Activated CD4-positive, alpha-beta T cell treated with anti-CD3 and anti-CD28 coated beads, Interleukin-2, amount 10 ng/mL, durations not matched to agents 24 days and 14 days (primary cell): ENCODE measurements at regions of chr5 and their contacts with region 1.

Region 1: DNA sequence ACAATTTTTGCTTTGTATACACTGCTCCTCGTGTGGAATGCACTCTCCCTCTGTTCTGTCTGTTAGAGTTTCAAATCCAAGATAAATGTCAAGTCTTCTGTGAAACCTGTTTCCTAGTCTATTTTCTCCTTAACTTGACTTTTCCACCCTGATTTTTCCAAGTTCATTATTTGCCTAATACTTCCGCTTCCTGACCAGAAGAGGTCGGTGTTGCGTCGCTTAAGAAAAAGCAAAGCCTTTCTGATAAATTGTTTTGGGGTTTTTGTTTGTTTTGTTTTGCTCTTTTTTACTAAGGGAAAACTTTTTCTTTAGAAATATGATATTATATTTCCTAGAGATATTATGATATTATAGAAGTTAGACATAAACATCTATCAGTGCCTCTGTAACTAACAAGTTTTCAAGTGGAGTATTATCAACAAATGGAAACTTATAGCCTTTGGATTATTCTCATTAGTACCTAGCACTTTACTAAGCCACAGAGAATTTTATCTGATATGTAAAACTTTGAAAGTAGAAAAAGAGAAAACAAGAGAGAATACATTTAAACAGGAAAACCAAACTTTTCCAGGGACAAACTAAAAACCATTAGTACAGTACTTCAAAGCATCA is 55.8 kb downstream of the PHAX start:
- DNase-seq: peak; percentile 73
- H3K4me3 Mint-ChIP-seq: no peak overlapping the region
- H3K27ac Mint-ChIP-seq: no peak overlapping the region
- H3K4me1 Mint-ChIP-seq: peaks cover 6% of the 10 kb centered on the region
- H3K27me3 Mint-ChIP-seq: peaks cover 10% of the 10 kb centered on the region

Region 2: GRCh38 chr5:126801992-126802294 is 145.4 kb after region 1 on chr5:
- intact Hi-C with region 1: loop called (anchors 1 kb)
- DNase-seq: peak; percentile 72
- H3K4me3 Mint-ChIP-seq: no peak overlapping the region
- H3K27ac Mint-ChIP-seq: peak overlapping the region; percentile 6
- H3K4me1 Mint-ChIP-seq: peaks cover 45% of the 10 kb centered on the region
- H3K27me3 Mint-ChIP-seq: no peaks in the 10 kb centered on the region

Region 3: GRCh38 chr5:127313847-127314473 is 657.5 kb after region 1 on chr5:
- intact Hi-C with region 1: loop called (anchors 1 kb)
- DNase-seq: peak; percentile 90
- H3K4me3 Mint-ChIP-seq: no peak overlapping the region
- H3K27ac Mint-ChIP-seq: no peak overlapping the region
- H3K4me1 Mint-ChIP-seq: no peaks in the 10 kb centered on the region
- H3K27me3 Mint-ChIP-seq: peaks cover 22% of the 10 kb centered on the region